Mammary epithelial cell (primary cell): ENCODE measurements at regions of chr3 and their contacts with region 1.

Region 1: DNA sequence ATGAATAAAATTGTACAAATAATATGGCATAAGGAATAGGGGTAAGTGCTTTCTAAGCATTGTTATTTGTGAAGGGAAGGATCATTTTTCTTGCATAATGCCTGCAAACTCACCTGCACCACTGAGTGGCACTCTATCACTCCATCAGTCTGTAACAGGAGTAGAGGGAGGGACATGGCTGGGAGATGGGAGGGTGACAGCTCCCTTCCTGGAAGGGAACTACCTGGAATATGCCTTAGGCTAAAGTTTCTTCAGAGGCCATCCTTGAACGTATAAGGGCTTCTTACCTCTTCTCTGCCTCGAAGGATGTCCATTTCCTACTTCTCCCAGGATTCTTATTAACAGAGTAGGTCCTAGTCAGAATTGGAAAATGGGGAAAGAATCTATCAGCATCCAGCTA is 3.0 kb downstream of the NAALADL2 start:
- DNase-seq: peak; percentile 66
- H3K4me3 ChIP-seq: no peak overlapping the region
- H3K27ac ChIP-seq: no peak overlapping the region
- H3K4me1 ChIP-seq: peaks cover 22% of the 10 kb centered on the region
- H3K27me3 ChIP-seq: no peaks in the 10 kb centered on the region
- CTCF ChIP-seq: peak; percentile 64 to 73

Region 2: DNA sequence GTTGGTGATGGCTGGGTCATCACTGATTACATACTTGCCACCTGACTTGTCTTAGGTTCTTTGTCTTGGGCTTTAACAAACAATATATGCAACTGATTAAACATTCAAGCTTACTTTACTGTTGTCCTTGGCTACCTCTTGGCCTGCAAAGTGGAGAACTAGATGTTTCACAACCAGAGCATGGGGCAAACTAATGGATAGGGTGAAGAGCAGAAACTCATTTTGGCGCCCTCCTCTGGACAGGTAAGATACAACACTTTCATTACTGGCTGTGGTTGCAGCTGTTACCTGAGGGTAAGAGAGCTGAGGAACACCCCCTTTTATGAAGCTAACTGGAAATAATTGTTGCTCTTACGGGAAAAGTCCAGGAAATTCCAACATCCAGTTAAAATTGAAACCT is 259.1 kb after region 1 on chr3:
- CTCF ChIA-PET with region 1: no interaction called
- dilution Hi-C with region 1: no loop called
- in situ Hi-C with region 1: no loop called
- intact Hi-C with region 1: loop called (anchors 1 kb)
- DNase-seq: peak; percentile 41
- H3K4me3 ChIP-seq: no peak overlapping the region
- H3K27ac ChIP-seq: no peak overlapping the region
- H3K4me1 ChIP-seq: no peaks in the 10 kb centered on the region
- H3K27me3 ChIP-seq: no peaks in the 10 kb centered on the region
- CTCF ChIP-seq: peak; percentile 62 to 63

Region 3: GRCh38 chr3:175386618-175387017 is 524.5 kb after region 1 on chr3:
- CTCF ChIA-PET with region 1: no interaction called
- dilution Hi-C with region 1: no loop called
- in situ Hi-C with region 1: no loop called
- intact Hi-C with region 1: no loop called
- DNase-seq: peak; percentile 89
- H3K4me3 ChIP-seq: no peak overlapping the region
- H3K27ac ChIP-seq: no peak overlapping the region
- H3K4me1 ChIP-seq: peaks cover 4% of the 10 kb centered on the region
- H3K27me3 ChIP-seq: no peaks in the 10 kb centered on the region
- CTCF ChIP-seq: no peak

Region 4: DNA sequence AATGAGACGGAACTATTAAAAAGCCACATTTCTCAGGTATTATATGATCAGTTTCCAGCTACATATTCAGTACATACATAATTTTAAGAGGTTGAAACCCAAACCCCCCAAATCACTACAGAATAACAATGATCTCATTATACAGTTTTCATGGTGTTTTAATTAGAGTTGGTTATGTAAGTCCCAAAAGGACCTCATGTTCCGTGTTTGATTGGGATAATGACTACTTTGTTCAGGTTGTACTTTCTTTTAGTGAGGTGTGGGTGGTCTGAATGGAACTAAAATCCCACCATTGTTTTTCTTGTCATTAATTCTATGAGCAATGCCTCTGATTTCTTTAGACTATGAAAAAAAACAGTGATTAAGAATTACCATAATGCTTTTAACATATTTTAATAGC is 902.6 kb after region 1 on chr3:
- CTCF ChIA-PET with region 1: no interaction called
- dilution Hi-C with region 1: no loop called
- in situ Hi-C with region 1: no loop called
- intact Hi-C with region 1: no loop called
- DNase-seq: no peak
- H3K4me3 ChIP-seq: no peak overlapping the region
- H3K27ac ChIP-seq: no peak overlapping the region
- H3K4me1 ChIP-seq: no peaks in the 10 kb centered on the region
- H3K27me3 ChIP-seq: peaks cover 2% of the 10 kb centered on the region
- CTCF ChIP-seq: no peak

Region 5: GRCh38 chr3:175941356-175941755 is 1079.2 kb after region 1 on chr3:
- CTCF ChIA-PET with region 1: no interaction called
- dilution Hi-C with region 1: no loop called
- in situ Hi-C with region 1: no loop called
- intact Hi-C with region 1: loop called (anchors 1 kb)
- DNase-seq: peak; percentile 16
- H3K4me3 ChIP-seq: no peak overlapping the region
- H3K27ac ChIP-seq: no peak overlapping the region
- H3K4me1 ChIP-seq: no peaks in the 10 kb centered on the region
- H3K27me3 ChIP-seq: no peaks in the 10 kb centered on the region
- CTCF ChIP-seq: peak; percentile 56